CD8-positive, alpha-beta T cell (primary cell): ENCODE measurements at regions of chr7 and their contacts with region 1.

Region 1: GRCh38 chr7:139359366-139360209 is at the start of gene LUC7L2:
- DNase-seq: peak; percentile 99 to 100 (median 99)
- ATAC-seq: peak; percentile 74
- H3K4me3 ChIP-seq: peak within 1 kb of the TSS; percentile 86 to 97
- H3K4me3 Mint-ChIP-seq: peak within 1 kb of the TSS; percentile 99
- H3K27ac ChIP-seq: peak within 1 kb of the TSS; percentile 93 to 99
- H3K27ac Mint-ChIP-seq: peak within 1 kb of the TSS; percentile 100
- H3K4me1 ChIP-seq: peaks cover 35% of the 10 kb centered on the region
- H3K4me1 Mint-ChIP-seq: peaks cover 41% of the 10 kb centered on the region
- H3K27me3 ChIP-seq: no peaks in the 10 kb centered on the region
- H3K27me3 Mint-ChIP-seq: no peaks in the 10 kb centered on the region
- CTCF ChIP-seq: no peak
- total RNA-seq, gene LUC7L2: 171 to 192 TPM

Region 2: GRCh38 chr7:138459413-138460175 is 900.0 kb before region 1 on chr7:
- CTCF ChIA-PET with region 1: no interaction called
- POLR2A ChIA-PET with region 1: no interaction called
- intact Hi-C with region 1: loop called in 1 of 2 experiments (anchors 5 kb)
- DNase-seq: peak; percentile 95 to 99 (median 97)
- ATAC-seq: peak; percentile 85
- H3K4me3 ChIP-seq: peak overlapping the region; percentile 18 to 42
- H3K4me3 Mint-ChIP-seq: peak overlapping the region; percentile 96
- H3K27ac ChIP-seq: peak overlapping the region in 1 of 2 experiments; percentile 2
- H3K27ac Mint-ChIP-seq: peak overlapping the region; percentile 86
- H3K4me1 ChIP-seq: peaks cover 14% of the 10 kb centered on the region
- H3K4me1 Mint-ChIP-seq: peaks cover 28% of the 10 kb centered on the region
- H3K27me3 ChIP-seq: no peaks in the 10 kb centered on the region
- H3K27me3 Mint-ChIP-seq: no peaks in the 10 kb centered on the region
- CTCF ChIP-seq: no peak

Region 3: DNA sequence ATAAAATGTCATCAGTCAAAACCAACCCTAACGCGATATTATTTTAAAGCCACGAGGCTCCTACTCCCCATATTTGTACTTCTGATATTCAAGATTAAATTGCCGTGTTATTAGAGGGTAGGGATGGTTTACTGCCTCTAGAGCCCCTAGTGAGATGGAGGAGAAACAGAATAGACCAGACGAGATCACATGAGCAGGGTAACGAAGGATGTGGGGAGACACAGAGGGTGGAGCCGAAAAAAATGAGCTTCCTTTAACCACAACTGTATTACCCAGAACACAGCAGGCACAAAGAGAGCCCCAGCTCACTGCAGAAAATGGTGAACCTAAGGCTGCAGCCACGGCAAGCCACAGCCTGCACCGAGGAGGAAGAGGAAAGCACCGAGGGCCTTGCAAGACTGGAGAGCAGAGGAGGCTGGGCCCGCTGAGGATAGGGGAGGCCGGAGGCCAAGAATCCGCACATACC is 264.4 kb before region 1 on chr7:
- CTCF ChIA-PET with region 1: no interaction called
- POLR2A ChIA-PET with region 1: interaction called, 3 read pairs
- intact Hi-C with region 1: loop called in 1 of 2 experiments (anchors 5 kb)
- DNase-seq: peak; percentile 57 to 96 (median 82)
- ATAC-seq: peak; percentile 84
- H3K4me3 ChIP-seq: peak overlapping the region; percentile 34 to 53
- H3K4me3 Mint-ChIP-seq: peak overlapping the region; percentile 84
- H3K27ac ChIP-seq: peak overlapping the region; percentile 61 to 76
- H3K27ac Mint-ChIP-seq: peak overlapping the region; percentile 95
- H3K4me1 ChIP-seq: peaks cover 82% of the 10 kb centered on the region
- H3K4me1 Mint-ChIP-seq: peaks cover 86% of the 10 kb centered on the region
- H3K27me3 ChIP-seq: no peaks in the 10 kb centered on the region
- H3K27me3 Mint-ChIP-seq: no peaks in the 10 kb centered on the region
- CTCF ChIP-seq: no peak

Region 4: GRCh38 chr7:139230774-139231512 is 128.6 kb before region 1 on chr7 and contains the start of gene UBN2:
- CTCF ChIA-PET with region 1: no interaction called
- POLR2A ChIA-PET with region 1: interaction called, 3 read pairs
- intact Hi-C with region 1: loop called (anchors 1 kb)
- DNase-seq: peak; percentile 65 to 96 (median 89)
- ATAC-seq: peak; percentile 72
- H3K4me3 ChIP-seq: peak within 1 kb of the TSS; percentile 73 to 86
- H3K4me3 Mint-ChIP-seq: peak within 1 kb of the TSS; percentile 99
- H3K27ac ChIP-seq: peak within 1 kb of the TSS; percentile 68 to 81
- H3K27ac Mint-ChIP-seq: peak within 1 kb of the TSS; percentile 97
- H3K4me1 ChIP-seq: peaks cover 20% of the 10 kb centered on the region
- H3K4me1 Mint-ChIP-seq: peaks cover 33% of the 10 kb centered on the region
- H3K27me3 ChIP-seq: no peaks in the 10 kb centered on the region
- H3K27me3 Mint-ChIP-seq: peaks cover 5% of the 10 kb centered on the region
- CTCF ChIP-seq: no peak
- total RNA-seq, gene UBN2: 12.2 to 13.0 TPM

Region 5: GRCh38 chr7:139370301-139370942 is 10.8 kb after region 1 on chr7:
- CTCF ChIA-PET with region 1: interaction called, 3 read pairs
- POLR2A ChIA-PET with region 1: interaction called, 10 read pairs
- intact Hi-C with region 1: loop called in 1 of 2 experiments (anchors 1 kb)
- DNase-seq: no peak
- ATAC-seq: no peak
- H3K4me3 ChIP-seq: no peak overlapping the region
- H3K4me3 Mint-ChIP-seq: peak overlapping the region; percentile 29
- H3K27ac ChIP-seq: no peak overlapping the region
- H3K27ac Mint-ChIP-seq: peak overlapping the region; percentile 56
- H3K4me1 ChIP-seq: peaks cover 50% of the 10 kb centered on the region
- H3K4me1 Mint-ChIP-seq: peaks cover 80% of the 10 kb centered on the region
- H3K27me3 ChIP-seq: no peaks in the 10 kb centered on the region
- H3K27me3 Mint-ChIP-seq: no peaks in the 10 kb centered on the region
- CTCF ChIP-seq: no peak

Region 6: GRCh38 chr7:139737221-139738100 is 377.9 kb after region 1 on chr7:
- CTCF ChIA-PET with region 1: no interaction called
- POLR2A ChIA-PET with region 1: no interaction called
- intact Hi-C with region 1: loop called in 1 of 2 experiments (anchors 5 kb)
- DNase-seq: peak in 2 of 9 experiments; percentile 8 to 49
- ATAC-seq: peak; percentile 52
- H3K4me3 ChIP-seq: no peak overlapping the region
- H3K4me3 Mint-ChIP-seq: peak overlapping the region; percentile 55
- H3K27ac ChIP-seq: peak overlapping the region in 1 of 2 experiments; percentile 44
- H3K27ac Mint-ChIP-seq: peak overlapping the region; percentile 69
- H3K4me1 ChIP-seq: peaks cover 25% of the 10 kb centered on the region
- H3K4me1 Mint-ChIP-seq: peaks cover 63% of the 10 kb centered on the region
- H3K27me3 ChIP-seq: no peaks in the 10 kb centered on the region
- H3K27me3 Mint-ChIP-seq: no peaks in the 10 kb centered on the region
- CTCF ChIP-seq: no peak

Region 7: GRCh38 chr7:140062528-140063299 is 703.1 kb after region 1 on chr7 and contains the start of gene PARP12:
- CTCF ChIA-PET with region 1: no interaction called
- POLR2A ChIA-PET with region 1: interaction called, 3 read pairs
- intact Hi-C with region 1: loop called in 1 of 2 experiments (anchors 2 kb)
- DNase-seq: peak; percentile 78 to 94 (median 87)
- ATAC-seq: peak; percentile 76
- H3K4me3 ChIP-seq: peak within 1 kb of the TSS; percentile 68 to 86
- H3K4me3 Mint-ChIP-seq: peak within 1 kb of the TSS; percentile 95
- H3K27ac ChIP-seq: peak within 1 kb of the TSS; percentile 82
- H3K27ac Mint-ChIP-seq: peak within 1 kb of the TSS; percentile 94
- H3K4me1 ChIP-seq: peaks cover 34% of the 10 kb centered on the region
- H3K4me1 Mint-ChIP-seq: peaks cover 42% of the 10 kb centered on the region
- H3K27me3 ChIP-seq: no peaks in the 10 kb centered on the region
- H3K27me3 Mint-ChIP-seq: no peaks in the 10 kb centered on the region
- CTCF ChIP-seq: no peak
- total RNA-seq, gene PARP12: 70.3 to 85.5 TPM